AG04449 (cell line): ENCODE measurements at regions of chr5 and their contacts with region 1.

Region 1: GRCh38 chr5:149114403-149115312 is 26.6 kb upstream of the ABLIM3 start:
- DNase-seq: peak; percentile 54
- H3K4me3 ChIP-seq: no peak overlapping the region
- CTCF ChIP-seq: peak; percentile 86

Region 2: DNA sequence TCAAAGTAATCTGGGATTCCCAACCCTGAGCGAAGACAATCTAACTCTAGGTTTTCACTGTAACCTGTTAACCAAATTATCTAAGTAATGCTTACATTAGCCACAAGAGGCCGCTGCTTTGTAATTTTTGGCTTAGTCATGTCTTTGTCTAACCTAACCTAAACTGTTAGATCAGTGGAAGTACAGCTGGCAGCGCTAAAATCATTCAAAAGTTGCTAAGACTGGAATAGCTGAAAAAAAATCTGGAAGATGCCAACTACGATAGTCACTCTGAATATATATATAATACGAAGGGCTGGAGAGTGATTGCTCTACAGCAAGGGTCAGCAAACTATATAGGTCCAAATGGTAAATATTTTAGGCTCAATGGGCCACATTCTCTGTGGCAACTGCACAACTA is 670.7 kb before region 1 on chr5:
- CTCF ChIA-PET with region 1: interaction called, 16 read pairs
- POLR2A ChIA-PET with region 1: no interaction called
- DNase-seq: peak; percentile 14
- H3K4me3 ChIP-seq: no peak overlapping the region
- CTCF ChIP-seq: peak; percentile 63

Region 3: DNA sequence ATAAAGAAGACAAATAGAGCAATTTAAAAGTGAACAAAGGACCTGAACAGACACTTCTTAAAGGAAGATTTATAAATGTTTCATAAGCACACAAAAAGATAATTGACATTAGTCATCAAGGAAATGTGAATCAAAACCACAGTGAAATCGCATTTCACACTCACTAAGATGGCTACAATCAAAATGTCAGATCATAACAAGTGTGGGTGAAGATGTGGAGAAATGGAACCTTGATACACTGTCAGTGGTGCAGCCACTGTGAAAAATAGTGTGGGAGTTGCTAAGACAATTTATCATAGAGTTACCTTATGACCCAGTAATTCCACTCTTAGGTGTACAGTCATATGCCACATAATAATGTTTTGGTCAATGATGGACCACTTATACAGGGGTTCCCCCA is 405.8 kb before region 1 on chr5:
- CTCF ChIA-PET with region 1: no interaction called
- POLR2A ChIA-PET with region 1: no interaction called
- DNase-seq: no peak
- H3K4me3 ChIP-seq: no peak overlapping the region
- CTCF ChIP-seq: no peak

Region 4: DNA sequence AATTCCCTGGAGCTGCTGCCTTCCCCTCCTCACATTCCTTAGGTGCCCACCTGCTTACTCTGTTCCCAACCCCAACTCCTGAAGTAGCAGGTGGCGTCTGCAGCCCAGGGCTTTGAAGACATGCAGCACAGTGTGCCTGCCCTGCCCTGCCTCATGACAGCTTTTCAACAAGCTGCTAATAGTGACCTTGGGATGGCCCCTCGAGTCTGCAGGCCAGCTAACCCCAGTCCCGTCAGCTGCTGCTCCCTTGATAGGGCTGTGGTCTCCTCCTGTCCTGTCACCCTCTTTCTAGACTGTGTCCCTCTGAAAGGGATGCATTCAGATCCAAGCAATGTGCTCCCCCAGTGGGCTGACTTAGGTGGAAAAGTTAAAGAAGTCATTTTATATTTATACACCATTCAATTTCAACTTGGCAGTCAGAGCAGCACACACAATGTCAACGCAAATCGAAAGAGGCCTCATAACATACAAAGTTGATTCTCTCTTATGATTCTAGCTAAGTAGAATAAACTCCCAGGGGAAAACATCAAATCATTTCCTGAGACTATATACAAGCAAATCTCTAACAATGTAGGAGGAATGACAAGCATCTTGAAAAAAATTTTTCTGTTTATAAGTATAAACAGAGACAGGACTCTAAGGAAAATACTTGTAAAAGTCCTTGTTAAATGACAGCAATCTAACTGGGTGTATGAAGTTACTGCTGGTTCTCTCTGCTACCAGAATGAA is 250.4 kb before region 1 on chr5:
- CTCF ChIA-PET with region 1: no interaction called
- POLR2A ChIA-PET with region 1: no interaction called
- DNase-seq: no peak
- H3K4me3 ChIP-seq: no peak overlapping the region
- CTCF ChIP-seq: no peak

Region 5: DNA sequence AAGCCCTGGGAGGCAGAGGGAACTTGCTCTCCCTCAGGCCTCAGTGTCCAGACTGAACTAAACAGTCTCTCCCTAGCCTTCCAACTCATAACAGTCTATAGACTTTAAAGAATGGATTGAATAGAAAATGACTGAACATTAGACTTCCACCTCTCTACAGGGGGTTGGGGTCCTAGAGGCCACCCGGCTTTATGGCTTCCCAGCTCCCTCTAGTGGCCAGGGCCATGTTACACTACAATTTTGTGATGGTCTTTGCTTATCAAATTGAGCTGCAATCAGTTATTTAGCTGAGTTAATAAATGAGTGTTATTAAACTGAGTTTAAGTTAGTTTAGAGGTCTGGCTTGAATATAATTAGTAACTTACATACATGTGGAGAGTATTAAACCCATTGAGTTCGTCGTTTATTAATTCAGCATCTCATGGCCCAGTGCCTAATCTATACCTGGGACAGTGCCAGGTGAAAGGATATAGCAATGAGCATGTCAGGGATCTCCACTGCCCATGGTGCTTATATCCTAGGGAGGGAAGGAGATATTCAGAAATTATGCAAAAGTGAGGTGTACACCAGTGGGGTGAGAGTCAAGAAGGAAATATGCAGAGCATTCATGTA is 157.0 kb before region 1 on chr5:
- CTCF ChIA-PET with region 1: interaction called, 19 read pairs
- POLR2A ChIA-PET with region 1: no interaction called
- DNase-seq: no peak
- H3K4me3 ChIP-seq: no peak overlapping the region
- CTCF ChIP-seq: peak; percentile 63

Region 6: DNA sequence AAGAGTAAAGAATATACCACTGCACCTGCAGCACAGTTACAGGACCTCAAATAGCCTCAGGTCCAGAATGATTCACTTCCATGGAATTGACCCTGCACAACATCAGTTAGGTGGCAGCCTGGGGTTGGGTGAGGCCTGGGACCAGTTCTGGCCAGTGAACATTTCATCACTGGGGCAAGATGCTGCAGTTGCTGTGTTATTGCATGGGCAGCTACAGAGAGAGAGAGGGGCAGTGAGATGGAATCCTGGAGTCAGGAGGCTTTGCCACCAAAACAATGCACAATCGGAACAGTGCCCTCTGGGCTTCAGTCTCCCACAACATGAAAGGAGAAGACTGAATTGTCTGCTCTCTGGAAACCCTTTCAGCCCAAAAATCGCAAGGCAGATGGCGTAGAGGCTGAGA is 103.6 kb before region 1 on chr5:
- CTCF ChIA-PET with region 1: interaction called, 37 read pairs
- POLR2A ChIA-PET with region 1: no interaction called
- DNase-seq: no peak
- H3K4me3 ChIP-seq: no peak overlapping the region
- CTCF ChIP-seq: no peak

Region 7: DNA sequence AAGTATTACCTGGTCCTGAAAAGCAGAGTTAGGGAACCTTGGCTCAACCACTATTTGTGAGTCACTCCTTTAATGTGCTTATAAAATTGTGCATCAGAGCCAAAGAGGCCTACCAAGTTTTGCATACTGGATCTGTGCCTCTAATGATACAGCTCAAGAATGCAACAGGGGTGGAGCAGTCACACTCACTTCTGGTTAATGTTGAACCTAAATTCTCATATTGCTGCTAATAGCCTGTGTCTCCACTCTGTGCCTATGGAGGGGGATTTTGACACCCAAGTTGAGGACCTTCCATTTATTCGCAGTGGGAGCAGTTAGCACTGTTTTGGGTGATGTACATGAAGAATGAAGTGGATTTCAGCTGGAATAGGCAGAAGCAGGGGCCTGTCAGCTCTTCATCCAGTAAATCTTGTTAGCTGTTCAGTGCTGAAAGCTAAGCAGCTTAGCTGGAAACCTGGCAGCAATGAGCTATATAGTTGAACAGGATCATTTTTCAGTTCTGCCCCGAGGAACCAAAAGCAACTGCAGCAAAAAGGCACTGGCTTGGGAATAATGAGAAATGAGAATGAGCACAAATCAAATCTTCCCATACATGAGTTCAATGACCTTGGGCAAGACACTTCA is 61.5 kb before region 1 on chr5:
- CTCF ChIA-PET with region 1: interaction called, 18 read pairs
- POLR2A ChIA-PET with region 1: no interaction called
- DNase-seq: no peak
- H3K4me3 ChIP-seq: no peak overlapping the region
- CTCF ChIP-seq: no peak

Region 8: DNA sequence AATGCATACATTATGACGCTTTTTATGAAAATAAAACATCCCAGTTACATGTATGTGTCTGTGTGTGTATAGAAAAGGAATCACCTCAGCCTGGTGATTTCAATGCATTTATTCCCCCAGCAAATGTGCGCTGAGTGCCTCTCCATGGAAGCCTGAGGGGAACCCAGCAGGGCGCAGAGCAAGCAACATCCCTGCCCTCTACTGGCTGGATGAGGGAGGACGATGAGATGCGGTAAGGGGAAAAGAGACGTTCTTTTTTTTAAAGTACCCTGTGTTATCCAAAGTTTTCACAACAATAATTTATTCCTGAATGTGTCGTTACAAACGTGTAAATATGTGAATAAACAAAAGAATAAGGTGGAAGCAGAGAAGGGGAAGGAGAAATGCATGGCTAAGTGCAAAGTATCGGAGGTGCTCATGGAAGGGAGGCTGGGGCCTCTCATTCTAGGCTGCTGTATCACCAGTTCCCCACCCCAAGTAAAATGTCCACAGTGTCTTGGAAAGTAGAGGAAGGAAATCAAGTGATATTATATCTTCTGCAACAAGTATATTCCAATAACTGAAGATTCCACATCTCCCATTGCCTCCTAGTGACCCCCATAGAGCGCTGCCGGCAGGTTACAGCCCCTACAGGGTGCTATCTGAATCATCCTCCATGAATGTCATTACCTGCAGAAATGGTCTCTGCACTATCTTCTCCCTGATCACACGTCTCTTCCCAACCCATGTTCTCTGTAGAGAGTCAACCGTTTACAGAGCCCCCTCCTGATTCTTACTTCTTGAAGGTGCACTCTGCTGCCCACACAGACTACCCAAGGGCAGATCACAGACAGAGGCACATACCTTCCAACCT is 13.6 kb after region 1 on chr5:
- CTCF ChIA-PET with region 1: interaction called, 48 read pairs
- POLR2A ChIA-PET with region 1: no interaction called
- DNase-seq: no peak
- H3K4me3 ChIP-seq: no peak overlapping the region
- CTCF ChIP-seq: peak; percentile 86

Region 9: DNA sequence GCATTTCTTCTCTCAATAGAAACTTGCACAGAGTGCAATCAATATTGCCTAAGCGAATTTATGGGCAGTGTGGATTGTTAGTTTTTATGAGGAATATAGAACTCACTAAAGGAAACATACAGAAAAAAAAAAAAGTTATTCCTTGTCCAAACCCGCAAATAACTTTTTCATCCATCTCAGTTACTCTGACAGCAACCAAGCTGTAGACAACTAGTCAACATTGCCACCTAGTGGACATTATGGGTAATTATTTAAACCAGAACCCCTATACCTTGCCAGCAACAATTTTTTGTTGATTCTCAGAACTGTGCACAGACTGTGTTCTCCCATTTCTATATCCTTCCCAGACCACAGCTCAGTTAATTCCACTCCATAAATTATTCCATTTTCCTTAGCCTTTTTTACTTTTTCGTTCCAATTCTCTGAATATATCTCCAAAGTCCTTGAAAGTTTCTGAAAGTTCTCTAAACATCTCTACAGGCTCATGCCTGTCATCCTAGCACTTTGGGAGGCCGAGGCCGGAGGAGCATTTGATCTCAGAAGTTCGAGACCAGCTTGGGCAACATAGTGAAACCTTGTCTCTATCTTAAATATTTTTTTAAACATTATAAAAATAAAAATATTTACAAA is 154.4 kb after region 1 on chr5:
- CTCF ChIA-PET with region 1: interaction called, 10 read pairs
- POLR2A ChIA-PET with region 1: no interaction called
- DNase-seq: no peak
- H3K4me3 ChIP-seq: no peak overlapping the region
- CTCF ChIP-seq: peak; percentile 36